ENCODE measurements at regions of chrX and their contacts with region 1.

Region 1: DNA sequence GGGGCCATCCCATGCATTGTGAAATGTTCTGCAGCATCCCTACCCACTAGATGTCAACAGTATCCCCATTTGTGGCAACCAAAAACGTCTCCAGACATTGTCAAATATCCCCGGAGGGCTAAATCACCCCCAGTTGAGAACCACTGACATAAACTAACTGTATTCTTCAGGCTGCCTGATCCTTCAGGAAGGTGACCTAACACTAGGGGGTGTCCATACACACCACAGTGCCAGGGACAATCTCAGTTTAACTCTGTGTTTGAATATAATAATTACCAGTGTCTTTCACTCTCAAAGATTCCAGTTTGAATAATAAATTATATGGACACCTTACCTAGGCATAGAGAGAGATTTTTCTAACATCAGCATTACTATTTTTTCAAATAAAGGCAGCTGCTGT is 6.4 kb downstream of the ACE2 start:
- DNase-seq: no peak
- H3K4me3 ChIP-seq: no peak overlapping the region
- H3K27ac ChIP-seq: no peak overlapping the region
- H3K4me1 ChIP-seq: peaks cover 5% of the 10 kb centered on the region
- H3K27me3 ChIP-seq: no peaks in the 10 kb centered on the region
- CTCF ChIP-seq: peak; percentile 43 to 74

Region 2: DNA sequence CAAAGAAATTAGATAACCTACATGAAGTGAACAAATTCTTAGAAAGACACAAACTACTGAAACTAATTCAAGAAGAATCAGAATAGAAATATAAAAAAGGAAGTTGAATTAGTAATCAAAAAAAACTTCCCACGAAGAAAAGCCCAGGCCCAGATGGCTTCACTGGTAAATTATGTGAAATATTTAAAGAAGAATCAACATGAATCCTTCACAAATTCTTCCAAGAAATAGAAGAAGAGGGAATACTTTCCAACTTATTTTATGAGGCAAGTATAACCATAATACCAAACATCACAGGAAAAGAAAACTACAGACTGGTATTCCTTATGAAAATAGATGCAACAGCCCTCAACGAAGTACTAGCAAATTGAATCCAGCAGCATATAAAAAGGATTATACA is 690.5 kb before region 1 on chrX:
- CTCF ChIA-PET with region 1: no interaction called
- dilution Hi-C with region 1: no loop called
- in situ Hi-C with region 1: no loop called
- intact Hi-C with region 1: no loop called
- DNase-seq: no peak
- H3K4me3 ChIP-seq: no peak overlapping the region
- H3K27ac ChIP-seq: no peak overlapping the region
- H3K4me1 ChIP-seq: peaks cover 8% of the 10 kb centered on the region
- H3K27me3 ChIP-seq: no peaks in the 10 kb centered on the region
- CTCF ChIP-seq: no peak

Region 3: DNA sequence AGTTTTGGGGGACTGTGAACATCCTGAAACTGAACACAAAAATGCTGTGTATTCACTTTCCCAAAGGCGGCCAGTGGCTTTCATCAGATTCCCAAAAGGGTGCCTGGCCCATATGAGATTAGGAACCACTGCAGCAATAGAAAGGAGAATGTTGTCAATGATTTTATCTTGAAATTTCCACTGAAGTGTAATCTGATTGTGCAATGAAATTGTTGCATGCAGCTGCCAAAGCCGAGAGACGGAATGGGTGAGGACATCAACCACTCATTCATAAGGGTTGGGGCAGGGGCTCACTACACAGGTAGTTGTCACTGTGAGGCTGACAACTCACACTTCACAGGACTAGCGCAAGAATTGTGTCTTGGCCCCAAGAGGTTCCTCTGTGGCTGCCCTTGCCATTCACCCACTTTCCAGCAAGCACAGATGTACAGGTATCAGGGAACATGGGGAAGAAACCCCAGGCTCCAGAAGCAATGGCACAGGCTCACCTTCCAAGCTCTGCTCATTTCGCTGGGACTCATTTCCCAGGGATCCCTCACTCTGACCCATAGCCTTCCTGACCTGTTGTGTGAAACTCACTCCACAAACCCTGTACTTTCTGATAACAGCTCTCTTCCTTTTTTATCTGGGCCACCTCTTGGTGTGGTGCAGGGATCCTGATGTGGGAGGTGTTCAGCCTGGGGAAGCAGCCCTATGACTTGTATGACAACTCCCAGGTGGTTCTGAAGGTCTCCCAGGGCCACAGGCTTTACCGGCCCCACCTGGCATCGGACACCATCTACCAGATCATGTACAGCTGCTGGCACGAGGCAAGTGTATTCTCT is 45.0 kb before region 1 on chrX:
- CTCF ChIA-PET with region 1: no interaction called
- dilution Hi-C with region 1: no loop called
- in situ Hi-C with region 1: no loop called
- intact Hi-C with region 1: no loop called
- DNase-seq: no peak
- H3K4me3 ChIP-seq: no peak overlapping the region
- H3K27ac ChIP-seq: no peak overlapping the region
- H3K4me1 ChIP-seq: no peaks in the 10 kb centered on the region
- H3K27me3 ChIP-seq: no peaks in the 10 kb centered on the region
- CTCF ChIP-seq: no peak

Region 4: GRCh38 chrX:15645258-15645657 is 50.9 kb after region 1 on chrX:
- CTCF ChIA-PET with region 1: no interaction called
- dilution Hi-C with region 1: no loop called
- in situ Hi-C with region 1: no loop called
- intact Hi-C with region 1: loop called (anchors 1 kb)
- DNase-seq: no peak
- H3K4me3 ChIP-seq: no peak overlapping the region
- H3K27ac ChIP-seq: no peak overlapping the region
- H3K4me1 ChIP-seq: no peaks in the 10 kb centered on the region
- H3K27me3 ChIP-seq: no peaks in the 10 kb centered on the region
- CTCF ChIP-seq: no peak